Calu3 (cell line): ENCODE measurements at regions of chr6 and their contacts with region 1.

Region 1: DNA sequence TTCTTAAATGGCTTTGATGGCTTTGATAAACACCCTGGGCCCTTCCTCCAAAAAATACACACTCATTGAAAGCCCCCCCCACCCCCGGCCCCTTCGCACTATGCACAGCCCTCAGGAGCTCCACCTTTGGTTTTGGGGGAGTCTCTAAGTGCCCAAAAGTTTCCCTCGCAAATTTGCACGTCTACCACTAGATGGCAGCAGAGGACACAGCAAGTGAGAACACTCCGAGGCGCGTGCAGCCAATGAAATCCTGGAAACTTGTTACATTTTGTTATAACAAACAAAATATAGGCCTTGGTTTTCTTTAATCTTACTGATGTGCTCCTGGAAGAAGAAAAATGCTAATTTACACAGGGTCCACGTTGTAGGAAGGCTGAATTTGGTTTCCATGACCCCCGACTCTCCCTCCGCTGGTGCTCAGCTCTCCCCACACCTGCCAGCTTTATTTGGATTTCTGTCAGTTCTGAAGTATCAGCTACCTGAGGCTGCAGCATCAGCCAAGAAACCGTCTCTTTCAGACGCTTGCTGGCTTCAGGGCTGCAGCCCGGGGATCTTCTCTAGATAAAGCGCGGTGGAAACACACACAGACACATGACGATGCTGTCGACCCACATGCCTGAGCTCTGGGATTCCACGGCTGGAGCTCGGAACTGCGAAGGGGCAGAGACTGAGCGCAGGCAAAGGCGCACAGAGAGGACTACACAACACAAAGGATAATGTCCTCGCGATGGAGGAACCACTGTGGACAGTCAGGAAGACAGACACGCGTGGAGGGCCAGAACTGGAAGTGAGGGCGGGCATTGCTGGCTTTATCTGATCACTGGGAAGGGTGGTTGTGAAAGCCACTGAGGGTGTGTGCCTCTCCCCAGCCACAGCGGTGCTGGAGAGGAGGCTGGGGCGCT is 148.4 kb upstream of the RPS6KA2 start:
- DNase-seq: peak; percentile 55
- H3K4me3 Mint-ChIP-seq: peak overlapping the region; percentile 41
- H3K27ac Mint-ChIP-seq: no peak overlapping the region
- H3K4me1 Mint-ChIP-seq: peaks cover 13% of the 10 kb centered on the region
- H3K27me3 Mint-ChIP-seq: peaks cover 49% of the 10 kb centered on the region
- CTCF ChIP-seq: peak; percentile 84

Region 2: GRCh38 chr6:166950443-166950821 is 175.0 kb after region 1 on chr6:
- CTCF ChIA-PET with region 1: interaction called, 12 read pairs
- intact Hi-C with region 1: no loop called
- DNase-seq: no peak
- H3K4me3 Mint-ChIP-seq: peak overlapping the region; percentile 37
- H3K27ac Mint-ChIP-seq: peak overlapping the region; percentile 69
- H3K4me1 Mint-ChIP-seq: peaks cover 24% of the 10 kb centered on the region
- H3K27me3 Mint-ChIP-seq: no peaks in the 10 kb centered on the region
- CTCF ChIP-seq: no peak

Region 3: GRCh38 chr6:166989427-166990032 is 214.1 kb after region 1 on chr6:
- CTCF ChIA-PET with region 1: interaction called, 24 read pairs
- intact Hi-C with region 1: no loop called
- DNase-seq: peak; percentile 4
- H3K4me3 Mint-ChIP-seq: no peak overlapping the region
- H3K27ac Mint-ChIP-seq: no peak overlapping the region
- H3K4me1 Mint-ChIP-seq: no peaks in the 10 kb centered on the region
- H3K27me3 Mint-ChIP-seq: no peaks in the 10 kb centered on the region
- CTCF ChIP-seq: peak; percentile 17

Region 4: DNA sequence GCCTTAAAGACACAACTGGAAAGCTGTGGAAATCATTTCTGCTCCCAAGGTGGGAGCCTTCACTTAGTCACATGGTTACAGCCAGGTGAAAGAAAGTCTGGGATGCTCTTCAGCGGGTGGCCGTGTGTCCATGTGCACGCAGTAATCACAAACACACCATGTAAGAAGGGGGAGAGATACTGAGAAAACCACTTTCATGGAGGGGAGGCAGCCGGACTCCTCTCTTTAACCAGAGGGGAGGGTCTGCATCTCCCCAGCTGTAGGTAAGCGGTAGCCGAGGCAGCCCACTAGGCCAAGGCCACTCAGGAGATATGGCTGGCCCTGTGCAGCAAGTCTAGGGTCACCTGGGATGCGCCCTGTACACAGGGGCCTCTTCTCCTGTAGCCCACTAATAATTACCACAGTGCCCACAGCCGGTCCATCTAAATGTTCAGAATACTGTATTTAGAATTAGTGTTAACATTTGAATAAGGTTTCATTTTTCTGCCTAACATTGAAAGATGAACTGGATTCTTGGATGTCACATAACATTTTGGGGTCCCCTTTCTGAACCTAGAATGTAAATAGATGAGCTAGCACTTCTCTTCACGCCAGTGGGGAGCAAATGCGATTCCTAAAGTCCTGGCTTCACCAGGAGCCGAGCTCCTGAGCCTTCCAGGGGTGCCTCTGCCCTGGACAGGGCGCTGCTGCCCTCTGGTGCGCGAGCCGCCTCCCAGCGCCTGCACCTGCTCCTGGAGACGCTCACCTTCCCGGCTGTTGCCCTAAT is 366.4 kb after region 1 on chr6:
- CTCF ChIA-PET with region 1: interaction called, 12 read pairs
- intact Hi-C with region 1: no loop called
- DNase-seq: peak; percentile 76
- H3K4me3 Mint-ChIP-seq: no peak overlapping the region
- H3K27ac Mint-ChIP-seq: no peak overlapping the region
- H3K4me1 Mint-ChIP-seq: peaks cover 8% of the 10 kb centered on the region
- H3K27me3 Mint-ChIP-seq: peaks cover 61% of the 10 kb centered on the region
- CTCF ChIP-seq: peak; percentile 51